Calu3 (cell line): ENCODE measurements at regions of chr19 and their contacts with region 1.

Region 1: DNA sequence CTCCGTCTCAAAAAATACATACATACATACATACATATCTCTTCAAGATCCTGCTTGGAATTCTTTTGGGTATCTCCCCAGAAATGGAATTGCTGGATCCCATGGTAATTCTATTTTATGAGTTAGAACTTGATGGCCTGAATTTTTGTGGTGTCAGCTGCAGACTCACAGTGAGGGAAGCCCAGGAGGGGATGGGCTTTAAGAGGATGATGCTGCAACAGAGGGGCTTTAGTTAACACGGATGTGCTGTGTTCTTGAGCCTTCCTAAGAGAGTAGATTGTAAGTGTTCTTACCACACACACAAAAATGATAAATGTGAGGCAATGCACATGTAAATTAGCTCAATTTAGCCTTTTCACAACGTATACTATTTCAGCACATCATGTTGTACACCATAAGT is 31.8 kb downstream of the CACNG6 start:
- DNase-seq: no peak
- H3K4me3 Mint-ChIP-seq: peak overlapping the region; percentile 13
- H3K27ac Mint-ChIP-seq: peak overlapping the region; percentile 98
- H3K4me1 Mint-ChIP-seq: peaks cover 50% of the 10 kb centered on the region
- H3K27me3 Mint-ChIP-seq: no peaks in the 10 kb centered on the region
- CTCF ChIP-seq: no peak

Region 2: DNA sequence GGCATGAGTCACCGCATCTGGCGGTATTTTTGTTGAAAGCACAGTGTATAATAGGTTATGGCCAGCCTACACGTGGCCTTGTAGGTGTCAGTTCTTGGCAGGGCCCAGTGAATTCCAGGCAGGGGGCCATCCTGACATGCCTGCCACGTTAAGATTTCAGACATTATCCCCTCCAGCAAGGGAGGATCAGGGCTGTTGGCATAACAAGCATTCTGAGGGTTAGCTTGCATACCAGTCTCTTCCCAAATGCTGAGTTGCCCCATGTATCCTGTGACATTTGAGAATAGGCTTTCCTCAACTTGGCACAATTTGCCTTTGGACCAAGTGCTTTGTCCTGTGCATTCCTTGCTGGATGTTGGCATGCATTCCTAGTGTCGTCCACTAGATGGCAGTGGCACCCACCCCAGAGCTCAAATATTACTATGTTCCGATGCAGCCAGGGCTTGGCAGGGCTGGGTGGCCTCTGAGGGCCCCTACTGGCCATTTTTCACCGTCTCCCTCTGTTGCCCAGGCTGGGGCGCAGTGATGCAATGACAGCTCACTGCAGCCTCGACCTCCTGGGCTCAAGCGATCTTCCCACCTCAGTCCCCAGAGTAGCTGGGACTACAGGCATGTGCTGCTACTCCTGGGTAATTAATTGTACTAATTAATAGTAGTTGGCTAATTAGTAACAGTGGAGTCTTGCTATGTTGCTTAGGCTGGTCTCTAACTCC is 230.3 kb before region 1 on chr19:
- CTCF ChIA-PET with region 1: interaction called, 15 read pairs
- intact Hi-C with region 1: no loop called
- DNase-seq: peak; percentile 94
- H3K4me3 Mint-ChIP-seq: no peak overlapping the region
- H3K27ac Mint-ChIP-seq: no peak overlapping the region
- H3K4me1 Mint-ChIP-seq: no peaks in the 10 kb centered on the region
- H3K27me3 Mint-ChIP-seq: no peaks in the 10 kb centered on the region
- CTCF ChIP-seq: peak; percentile 98

Region 3: DNA sequence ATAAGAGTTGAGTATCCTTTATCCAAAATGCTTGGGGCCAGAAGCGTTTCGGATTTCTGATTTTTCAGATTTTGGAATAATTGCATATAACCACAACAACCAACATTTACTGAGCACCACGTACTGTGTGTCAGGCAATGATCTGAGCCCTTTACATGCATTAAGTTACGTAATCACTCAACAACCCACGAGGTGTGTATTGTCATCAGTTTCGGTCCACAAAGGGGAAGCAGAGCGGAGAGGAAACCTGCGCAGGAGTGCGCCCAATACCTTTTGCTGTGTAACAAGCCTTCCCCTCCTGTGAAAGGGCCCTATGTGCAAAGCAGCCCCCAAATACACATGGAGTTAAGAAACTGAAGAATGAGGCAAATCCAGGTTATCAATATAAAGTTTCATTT is 178.3 kb before region 1 on chr19:
- CTCF ChIA-PET with region 1: no interaction called
- intact Hi-C with region 1: loop called (anchors 1 kb)
- DNase-seq: no peak
- H3K4me3 Mint-ChIP-seq: no peak overlapping the region
- H3K27ac Mint-ChIP-seq: no peak overlapping the region
- H3K4me1 Mint-ChIP-seq: peaks cover 15% of the 10 kb centered on the region
- H3K27me3 Mint-ChIP-seq: no peaks in the 10 kb centered on the region
- CTCF ChIP-seq: no peak

Region 4: GRCh38 chr19:53879140-53880081 is 143.8 kb before region 1 on chr19:
- CTCF ChIA-PET with region 1: interaction called, 21 read pairs
- intact Hi-C with region 1: no loop called
- DNase-seq: peak; percentile 99
- H3K4me3 Mint-ChIP-seq: no peak overlapping the region
- H3K27ac Mint-ChIP-seq: no peak overlapping the region
- H3K4me1 Mint-ChIP-seq: peaks cover 31% of the 10 kb centered on the region
- H3K27me3 Mint-ChIP-seq: no peaks in the 10 kb centered on the region
- CTCF ChIP-seq: no peak

Region 5: GRCh38 chr19:53906211-53907192 is 116.7 kb before region 1 on chr19:
- CTCF ChIA-PET with region 1: interaction called, 7 read pairs
- intact Hi-C with region 1: loop called (anchors 5 kb)
- DNase-seq: peak; percentile 86
- H3K4me3 Mint-ChIP-seq: peak overlapping the region; percentile 14
- H3K27ac Mint-ChIP-seq: peak overlapping the region; percentile 29
- H3K4me1 Mint-ChIP-seq: peaks cover 57% of the 10 kb centered on the region
- H3K27me3 Mint-ChIP-seq: peaks cover 45% of the 10 kb centered on the region
- CTCF ChIP-seq: peak; percentile 97

Region 6: DNA sequence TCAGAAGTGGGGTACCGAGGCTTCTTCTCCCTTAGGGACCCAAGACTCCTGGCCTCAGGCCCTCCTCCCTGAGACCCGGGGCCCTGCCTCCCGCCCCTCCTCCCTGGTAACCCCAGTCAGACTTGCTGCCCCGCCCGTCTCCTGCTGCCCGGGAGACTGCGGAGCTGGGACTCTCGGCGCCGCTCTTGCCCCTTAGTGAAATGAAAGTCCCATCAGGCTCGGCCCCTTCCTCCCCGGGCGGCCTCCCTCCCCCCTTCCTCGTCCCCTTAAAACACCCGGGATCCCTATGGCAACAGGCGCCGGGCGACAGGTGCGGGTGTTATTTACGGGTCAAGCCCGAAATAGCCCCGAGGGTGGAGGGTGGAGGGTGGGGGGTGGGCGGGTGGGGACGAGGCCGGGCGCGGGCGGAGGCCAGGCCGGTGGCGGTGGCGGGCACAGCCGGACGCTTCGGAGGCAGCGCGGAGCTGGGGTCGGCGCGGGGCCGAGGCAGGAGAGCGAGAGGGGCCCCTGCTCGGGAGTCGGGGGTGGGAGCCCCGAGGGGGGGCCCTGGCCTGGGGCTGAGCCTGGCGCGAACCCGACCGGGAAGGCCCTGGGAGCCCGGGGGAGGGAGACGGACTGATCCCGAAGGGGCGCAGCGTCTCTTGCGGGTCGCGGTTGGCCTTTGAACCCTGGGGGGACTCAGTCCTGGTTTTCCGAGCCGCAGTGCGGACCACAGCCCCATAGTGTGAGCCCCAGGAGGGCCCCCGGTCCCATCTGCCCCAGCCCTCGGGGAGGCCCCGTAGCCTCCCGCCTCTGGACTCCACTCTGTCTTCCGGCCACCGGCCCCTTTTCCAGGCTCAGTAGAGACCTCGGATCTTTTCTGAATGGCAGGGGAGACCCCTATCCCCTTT is 31.7 kb before region 1 on chr19 and contains the start of gene CACNG6:
- CTCF ChIA-PET with region 1: interaction called, 5 read pairs
- intact Hi-C with region 1: loop called (anchors 2 kb)
- DNase-seq: peak; percentile 94
- H3K4me3 Mint-ChIP-seq: peak within 1 kb of the TSS; percentile 76
- H3K27ac Mint-ChIP-seq: peak within 1 kb of the TSS; percentile 99
- H3K4me1 Mint-ChIP-seq: peaks cover 41% of the 10 kb centered on the region
- H3K27me3 Mint-ChIP-seq: no peaks in the 10 kb centered on the region
- CTCF ChIP-seq: no peak
- total RNA-seq, gene CACNG6: 137 and 144 TPM in 2 replicates

Region 7: DNA sequence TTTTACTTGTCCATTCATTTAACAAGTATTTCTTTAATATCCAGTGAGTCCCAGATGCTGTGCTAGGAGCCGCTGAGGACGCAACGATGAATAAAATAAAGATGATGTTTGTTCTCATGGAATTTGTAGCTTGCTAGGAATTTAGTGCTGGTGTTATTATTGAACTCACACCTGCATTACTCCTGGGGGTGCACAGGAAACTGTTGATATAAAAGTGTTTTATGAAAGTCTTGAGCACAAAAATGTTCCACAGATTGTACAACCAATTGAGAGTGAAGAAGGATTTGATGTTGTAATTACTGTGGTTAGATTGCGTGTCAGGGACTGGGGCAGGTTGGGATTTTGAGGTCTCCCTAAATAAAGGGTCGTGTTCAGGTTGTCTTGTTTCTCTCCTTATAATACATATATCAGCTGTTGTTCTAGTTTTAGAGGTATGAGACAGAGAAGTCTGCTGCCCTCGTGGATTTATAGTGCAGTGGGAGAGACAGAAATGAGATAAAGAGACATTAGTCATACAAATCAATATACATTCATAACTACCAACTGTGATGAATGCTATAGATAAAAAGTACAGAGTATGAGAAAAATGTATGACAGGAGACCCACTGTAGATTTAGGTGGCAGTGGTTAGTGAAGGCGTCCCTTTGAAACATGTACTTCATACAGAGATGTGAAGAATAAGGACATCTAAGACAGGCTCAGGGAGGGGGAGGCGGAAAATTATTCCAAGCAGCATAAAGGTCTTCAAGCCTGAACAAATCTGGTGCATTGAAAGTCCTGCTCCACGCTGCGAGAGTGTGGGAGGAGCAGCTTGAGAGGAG is 20.5 kb before region 1 on chr19:
- CTCF ChIA-PET with region 1: interaction called, 14 read pairs
- intact Hi-C with region 1: loop called (anchors 1 kb)
- DNase-seq: peak; percentile 73
- H3K4me3 Mint-ChIP-seq: peak overlapping the region; percentile 20
- H3K27ac Mint-ChIP-seq: peak overlapping the region; percentile 88
- H3K4me1 Mint-ChIP-seq: peaks cover 51% of the 10 kb centered on the region
- H3K27me3 Mint-ChIP-seq: no peaks in the 10 kb centered on the region
- CTCF ChIP-seq: no peak

Region 8: DNA sequence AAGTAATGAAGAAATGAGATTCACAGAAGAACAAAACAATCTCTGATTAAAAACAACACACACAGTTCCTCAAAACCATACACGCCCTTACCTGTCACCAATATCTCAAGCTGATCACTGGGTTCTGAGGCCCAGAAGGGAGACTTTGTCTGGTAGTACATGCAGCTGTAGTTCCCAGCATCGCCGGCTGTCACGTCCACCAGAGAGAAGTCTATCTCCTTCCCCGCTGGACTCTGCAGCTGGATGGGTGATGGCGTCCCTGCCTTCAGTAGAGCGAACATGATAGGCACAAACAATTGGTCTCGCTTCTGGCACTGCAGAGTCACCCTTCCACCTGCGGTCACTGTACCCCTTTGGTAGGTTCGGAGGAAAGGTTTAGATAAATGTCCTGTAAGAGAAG is 50.6 kb after region 1 on chr19:
- CTCF ChIA-PET with region 1: no interaction called
- intact Hi-C with region 1: no loop called
- DNase-seq: no peak
- H3K4me3 Mint-ChIP-seq: no peak overlapping the region
- H3K27ac Mint-ChIP-seq: no peak overlapping the region
- H3K4me1 Mint-ChIP-seq: no peaks in the 10 kb centered on the region
- H3K27me3 Mint-ChIP-seq: no peaks in the 10 kb centered on the region
- CTCF ChIP-seq: no peak